Activated CD4-positive, alpha-beta T cell treated with anti-CD3 and anti-CD28 coated beads, Interleukin-2, amount 10 ng/mL, durations not matched to agents 24 days and 14 days (primary cell): ENCODE measurements at regions of chr7 and their contacts with region 1.

Region 1: GRCh38 chr7:44291066-44291732 is 34.2 kb downstream of the CAMK2B start:
- DNase-seq: no peak
- H3K4me3 Mint-ChIP-seq: no peak overlapping the region
- H3K27ac Mint-ChIP-seq: no peak overlapping the region
- H3K4me1 Mint-ChIP-seq: no peaks in the 10 kb centered on the region
- H3K27me3 Mint-ChIP-seq: peaks cover 34% of the 10 kb centered on the region

Region 2: DNA sequence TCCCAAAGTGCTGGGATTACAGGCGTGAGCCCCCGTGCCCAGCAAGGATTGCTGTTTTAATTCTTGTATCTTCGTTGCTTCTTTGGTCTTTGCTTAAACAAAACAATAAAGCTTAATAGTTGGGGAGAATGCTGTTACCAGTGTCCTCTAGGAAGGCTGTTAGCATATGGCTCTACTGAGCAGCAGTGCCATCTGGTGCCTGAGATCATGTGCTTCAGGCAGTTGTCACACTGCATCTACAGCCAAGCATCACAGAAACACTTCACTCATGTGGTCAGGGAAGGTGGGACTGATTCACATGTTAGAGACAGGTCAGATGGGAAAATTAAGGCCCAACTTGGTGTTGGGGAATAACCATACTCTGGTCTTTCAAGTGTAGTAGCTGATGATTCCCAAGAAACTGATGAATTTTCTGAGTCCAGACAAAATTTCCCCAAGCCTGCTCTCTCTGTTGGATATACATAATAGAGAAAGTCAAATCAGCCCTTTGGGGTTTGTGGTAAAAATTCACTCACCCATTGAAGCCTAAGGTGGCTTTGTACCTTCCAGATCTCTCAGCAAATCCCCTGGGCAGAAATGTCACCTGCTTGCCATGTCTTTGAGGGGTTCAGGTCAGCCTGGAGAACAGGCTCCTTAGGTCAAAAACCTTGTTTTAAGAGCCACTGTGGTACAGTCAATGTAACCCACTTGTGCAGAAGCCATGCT is 336.5 kb before region 1 on chr7:
- intact Hi-C with region 1: loop called (anchors 10 kb)
- DNase-seq: peak; percentile 73
- H3K4me3 Mint-ChIP-seq: no peak overlapping the region
- H3K27ac Mint-ChIP-seq: no peak overlapping the region
- H3K4me1 Mint-ChIP-seq: peaks cover 8% of the 10 kb centered on the region
- H3K27me3 Mint-ChIP-seq: no peaks in the 10 kb centered on the region

Region 3: DNA sequence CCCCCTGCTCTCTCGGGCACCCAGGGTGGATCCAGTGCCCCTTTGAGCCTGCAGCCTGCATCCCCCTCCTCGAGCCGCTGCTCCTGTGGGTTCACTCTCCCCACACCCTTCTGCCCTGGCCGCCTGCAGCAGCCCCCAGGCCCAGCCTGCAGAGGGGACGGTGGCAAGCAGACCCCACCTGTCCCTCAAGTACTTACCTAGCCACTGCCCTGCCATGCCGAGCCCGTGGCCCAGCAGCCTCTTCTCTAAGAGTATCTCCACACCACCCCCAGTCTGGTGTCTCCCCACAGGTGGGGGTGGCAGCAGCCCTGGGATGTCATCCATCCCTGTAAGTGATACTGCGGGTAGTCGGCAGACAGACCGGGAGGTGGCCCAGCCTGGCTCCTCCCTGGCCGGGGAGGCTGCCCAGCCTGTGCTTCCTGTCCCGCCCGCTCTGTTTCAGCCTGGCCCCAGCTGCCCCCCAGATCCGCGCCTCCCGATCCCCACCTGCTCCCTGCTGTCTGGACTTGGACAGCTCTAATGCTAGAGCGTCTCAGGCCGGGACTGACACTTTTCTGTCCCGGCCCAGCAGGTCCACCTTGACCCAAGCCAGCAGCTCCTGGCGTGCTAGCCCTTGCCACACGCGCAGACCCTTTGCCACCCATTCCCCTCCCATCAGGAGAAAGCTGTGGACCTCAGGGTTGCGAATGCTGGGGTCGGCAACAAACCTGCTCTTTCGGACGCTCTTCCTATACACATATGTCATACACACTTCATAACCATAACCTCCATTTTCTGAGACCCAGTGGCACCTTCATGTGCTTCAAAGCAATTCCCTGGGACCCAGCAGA is 65.4 kb before region 1 on chr7:
- intact Hi-C with region 1: no loop called
- DNase-seq: no peak
- H3K4me3 Mint-ChIP-seq: no peak overlapping the region
- H3K27ac Mint-ChIP-seq: no peak overlapping the region
- H3K4me1 Mint-ChIP-seq: no peaks in the 10 kb centered on the region
- H3K27me3 Mint-ChIP-seq: no peaks in the 10 kb centered on the region

Region 4: DNA sequence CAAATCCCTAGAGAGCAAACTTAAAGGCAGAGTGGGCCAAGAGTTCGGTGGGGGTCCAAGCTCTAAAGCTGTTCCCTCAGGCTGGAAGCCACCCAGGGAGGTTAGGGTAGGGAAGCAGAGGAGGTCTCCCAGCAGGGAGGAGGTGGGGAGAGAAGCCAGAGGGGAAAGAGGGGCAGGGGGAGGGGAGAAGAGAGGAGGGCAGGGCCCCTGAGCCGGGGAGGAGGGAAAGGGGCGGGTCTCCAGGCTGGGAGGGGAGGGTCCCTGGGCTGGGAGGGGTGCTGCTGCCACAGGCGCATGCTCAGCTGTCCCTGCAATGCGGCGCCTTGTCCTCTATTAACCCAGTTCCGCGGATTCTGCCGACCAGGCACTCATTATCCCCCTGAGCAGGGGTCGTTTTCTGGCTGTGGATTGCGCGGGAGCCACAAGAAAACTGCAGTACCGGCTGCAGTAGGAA is 15.2 kb before region 1 on chr7:
- intact Hi-C with region 1: no loop called
- DNase-seq: no peak
- H3K4me3 Mint-ChIP-seq: no peak overlapping the region
- H3K27ac Mint-ChIP-seq: no peak overlapping the region
- H3K4me1 Mint-ChIP-seq: no peaks in the 10 kb centered on the region
- H3K27me3 Mint-ChIP-seq: peaks cover 2% of the 10 kb centered on the region